ENCODE measurements at regions of chr3 and their contacts with region 1.

Region 1: DNA sequence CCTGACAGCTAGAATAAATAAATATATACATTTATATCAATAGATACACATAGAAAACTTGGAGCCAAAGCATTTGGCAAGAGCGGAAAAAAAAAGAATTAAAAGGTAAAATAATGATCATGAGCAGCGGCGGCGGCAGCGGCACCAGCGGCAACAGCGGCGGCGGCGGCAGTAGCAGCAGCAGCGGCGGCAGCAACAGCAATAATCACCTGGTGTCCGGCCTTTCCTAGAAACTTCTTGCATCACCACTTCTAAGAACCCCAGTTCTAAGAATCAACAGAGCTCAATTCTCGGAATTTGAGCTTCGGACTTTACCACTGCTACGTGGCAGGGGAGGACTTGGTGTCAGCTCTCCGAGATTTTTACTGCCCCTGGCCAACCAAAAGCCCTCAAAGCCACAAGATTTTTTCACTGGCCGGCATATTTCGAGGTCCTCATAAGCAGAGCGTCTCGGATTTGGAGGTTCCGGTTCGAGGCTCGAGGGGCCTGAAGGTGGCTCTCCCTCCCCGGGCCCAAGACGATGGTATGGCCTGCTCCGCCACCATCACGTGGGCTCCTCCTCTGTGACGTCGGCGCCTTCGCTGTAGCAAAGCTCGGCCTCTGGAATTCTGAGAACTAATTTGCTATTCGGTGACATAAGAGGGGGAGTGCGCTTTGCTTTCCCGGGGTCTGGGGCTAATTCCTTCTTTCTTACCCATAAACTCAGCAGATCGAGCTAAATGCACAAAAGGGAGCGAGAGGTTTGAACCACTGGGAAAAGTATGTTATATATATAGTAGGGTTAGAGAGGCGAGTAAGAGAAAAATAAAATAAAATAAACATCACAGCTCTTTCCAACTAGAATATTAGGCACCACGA is at the start of gene BCL6:
- H3K4me3 ChIP-seq: peak within 1 kb of the TSS; percentile 84
- H3K27ac ChIP-seq: peak within 1 kb of the TSS; percentile 97
- H3K4me1 ChIP-seq: no peaks in the 10 kb centered on the region
- CTCF ChIP-seq: no peak

Region 2: GRCh38 chr3:187662848-187663409 is 82.5 kb before region 1 on chr3:
- CTCF ChIA-PET with region 1: no interaction called
- POLR2A ChIA-PET with region 1: no interaction called
- H3K4me3 ChIP-seq: no peak overlapping the region
- H3K27ac ChIP-seq: no peak overlapping the region
- H3K4me1 ChIP-seq: no peaks in the 10 kb centered on the region
- CTCF ChIP-seq: no peak

Region 3: DNA sequence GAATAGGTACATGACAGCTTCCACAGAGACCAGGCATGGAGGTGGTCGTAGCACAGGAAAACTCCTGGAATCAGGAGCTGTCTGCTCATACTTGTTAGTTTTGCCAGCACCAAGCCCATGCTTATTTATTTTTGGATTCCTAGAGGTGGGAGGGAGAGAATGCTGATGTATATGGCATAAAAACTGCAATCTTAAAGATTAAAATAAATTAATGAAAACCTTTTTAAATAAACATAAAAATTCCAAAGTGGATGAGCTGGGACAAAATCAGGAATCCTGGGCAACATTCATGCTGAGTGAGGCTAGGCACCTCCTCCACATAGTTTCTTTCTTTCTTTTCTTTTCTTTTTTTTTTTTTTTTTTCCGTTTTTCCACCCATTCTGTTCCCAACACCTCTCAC is 14.2 kb after region 1 on chr3:
- CTCF ChIA-PET with region 1: interaction called, 10 read pairs
- POLR2A ChIA-PET with region 1: no interaction called
- H3K4me3 ChIP-seq: no peak overlapping the region
- H3K27ac ChIP-seq: no peak overlapping the region
- H3K4me1 ChIP-seq: no peaks in the 10 kb centered on the region
- CTCF ChIP-seq: no peak

Region 4: DNA sequence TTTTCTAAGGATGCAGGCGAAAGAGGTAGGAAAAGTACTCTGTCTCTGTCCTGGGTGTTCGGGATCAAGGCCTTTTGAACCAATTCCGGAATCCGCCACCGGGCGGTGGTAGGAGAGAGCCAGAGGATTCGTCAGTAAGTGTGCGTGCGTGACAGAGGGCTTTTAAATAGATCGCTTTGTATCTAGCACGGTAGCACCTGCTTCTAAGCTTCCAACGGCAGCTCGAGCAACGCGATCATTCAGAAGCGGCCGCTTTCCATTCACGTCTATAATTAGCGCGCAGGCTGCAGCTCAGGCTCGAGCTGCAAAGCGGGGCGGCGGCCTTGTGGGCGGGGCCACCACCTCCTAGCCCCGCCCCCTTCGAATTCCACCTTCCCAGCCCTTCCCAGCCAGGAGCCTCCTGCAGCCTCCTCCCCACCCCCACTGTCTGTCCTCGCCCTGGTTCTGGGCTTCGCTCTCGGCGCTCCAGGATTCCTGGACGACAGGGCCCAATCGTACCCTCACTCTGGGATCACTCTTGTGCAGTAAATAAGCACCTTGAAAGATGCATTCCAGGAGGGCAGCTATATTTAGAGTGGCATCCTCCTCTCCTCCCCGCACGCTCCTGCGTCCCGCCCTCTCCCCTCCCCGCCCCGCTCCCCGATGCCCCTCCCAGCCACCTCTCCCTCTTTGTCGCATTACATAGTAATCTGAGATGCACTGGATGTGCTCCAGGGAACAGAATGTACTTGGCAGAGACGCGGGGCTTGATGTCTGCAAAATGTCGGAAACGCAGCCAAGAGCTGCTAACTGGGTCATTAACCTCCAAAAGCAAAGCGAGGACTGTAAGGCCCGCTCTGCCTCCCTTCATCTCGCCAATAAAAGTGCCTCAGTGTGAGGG is 1202.2 kb after region 1 on chr3:
- CTCF ChIA-PET with region 1: interaction called, 205 read pairs
- POLR2A ChIA-PET with region 1: interaction called, 15 read pairs
- H3K4me3 ChIP-seq: peak overlapping the region; percentile 55
- H3K27ac ChIP-seq: peak overlapping the region; percentile 70
- H3K4me1 ChIP-seq: no peaks in the 10 kb centered on the region
- CTCF ChIP-seq: peak; percentile 24; the same call in 1 of the 2 replicates